CD4-positive, alpha-beta memory T cell (primary cell): ENCODE measurements at regions of chr4 and their contacts with region 1.

Region 1: GRCh38 chr4:38948551-38948950 is 80.9 kb downstream of the FAM114A1 start:
- DNase-seq: no peak
- H3K4me3 ChIP-seq: no peak overlapping the region
- H3K4me3 Mint-ChIP-seq: no peak overlapping the region
- H3K27ac ChIP-seq: no peak overlapping the region
- H3K27ac Mint-ChIP-seq: peak overlapping the region; percentile 83 to 100 (median 97)
- H3K4me1 ChIP-seq: peaks cover 21% of the 10 kb centered on the region
- H3K4me1 Mint-ChIP-seq: peaks cover 18 to 25% (median 19%) of the 10 kb centered on the region in 4 donors
- H3K27me3 ChIP-seq: no peaks in the 10 kb centered on the region
- H3K27me3 Mint-ChIP-seq: peaks cover 0 to 2% of the 10 kb centered on the region in 2 donors

Region 2: DNA sequence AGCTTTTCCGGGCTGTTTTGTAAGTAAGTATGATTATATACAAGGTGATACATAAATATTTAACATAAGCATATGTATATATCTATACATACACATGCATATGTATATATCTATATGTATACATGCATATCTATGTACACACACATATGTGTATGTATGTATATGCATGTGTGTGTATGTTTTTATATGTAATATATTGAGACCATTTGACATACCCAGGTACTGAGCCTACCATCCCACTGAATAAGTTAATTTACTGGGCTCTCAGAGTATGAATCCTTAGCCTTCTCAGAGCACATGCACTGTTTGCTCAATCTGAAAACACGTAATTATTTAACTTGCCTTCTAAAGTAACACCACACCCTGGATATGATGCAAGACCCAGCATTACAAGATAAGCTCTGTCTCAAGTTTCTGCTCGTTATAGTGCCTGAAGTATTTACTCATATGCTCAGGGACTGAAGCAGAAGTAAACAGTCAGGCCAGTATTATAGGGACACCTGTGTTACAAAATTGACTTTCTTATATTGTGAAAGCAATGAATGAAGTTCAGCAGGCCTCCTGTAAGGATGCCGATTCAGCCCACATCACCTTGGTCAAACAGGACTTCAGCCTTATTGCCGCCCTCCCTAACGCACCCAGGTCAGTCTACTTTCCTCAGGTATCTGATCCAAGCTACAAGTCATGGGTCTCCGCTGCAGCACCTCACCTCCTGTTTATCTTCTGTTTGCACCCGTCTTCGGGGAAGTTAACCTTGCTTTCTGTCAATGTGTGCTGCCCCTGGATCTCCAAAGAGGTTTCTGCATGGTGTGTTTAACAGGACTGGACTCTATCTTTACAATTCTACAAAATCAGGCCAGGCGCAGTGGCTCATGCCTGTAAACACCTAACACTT is 327.5 kb before region 1 on chr4:
- CTCF ChIA-PET with region 1: no interaction called
- POLR2A ChIA-PET with region 1: no interaction called
- intact Hi-C with region 1: no loop called
- DNase-seq: no peak
- H3K4me3 ChIP-seq: no peak overlapping the region
- H3K4me3 Mint-ChIP-seq: no peak overlapping the region
- H3K27ac ChIP-seq: no peak overlapping the region
- H3K27ac Mint-ChIP-seq: no peak overlapping the region
- H3K4me1 ChIP-seq: no peaks in the 10 kb centered on the region
- H3K4me1 Mint-ChIP-seq: peaks cover 10 to 19% (median 13%) of the 10 kb centered on the region in 4 donors
- H3K27me3 ChIP-seq: no peaks in the 10 kb centered on the region
- H3K27me3 Mint-ChIP-seq: no peaks in the 10 kb centered on the region

Region 3: GRCh38 chr4:38980903-38981676 is 32.5 kb after region 1 on chr4:
- CTCF ChIA-PET with region 1: no interaction called
- POLR2A ChIA-PET with region 1: interaction called, 3 read pairs
- intact Hi-C with region 1: loop called (anchors 5 kb)
- DNase-seq: no peak
- H3K4me3 ChIP-seq: no peak overlapping the region
- H3K4me3 Mint-ChIP-seq: peak overlapping the region in 2 of 8 donors; percentile 8 to 17
- H3K27ac ChIP-seq: no peak overlapping the region
- H3K27ac Mint-ChIP-seq: peak overlapping the region in 6 of 7 donors; percentile 7 to 89 (median 37)
- H3K4me1 ChIP-seq: peaks cover 19% of the 10 kb centered on the region
- H3K4me1 Mint-ChIP-seq: peaks cover 20 to 30% (median 26%) of the 10 kb centered on the region in 4 donors
- H3K27me3 ChIP-seq: no peaks in the 10 kb centered on the region
- H3K27me3 Mint-ChIP-seq: no peaks in the 10 kb centered on the region